BJ (cell line): ENCODE measurements at regions of chr3 and their contacts with region 1.

Region 1: GRCh38 chr3:148932972-148933371 is 58.4 kb upstream of the GYG1 start:
- DNase-seq: no peak
- H3K4me3 ChIP-seq: no peak overlapping the region
- H3K27me3 ChIP-seq: no peaks in the 10 kb centered on the region
- CTCF ChIP-seq: no peak

Region 2: DNA sequence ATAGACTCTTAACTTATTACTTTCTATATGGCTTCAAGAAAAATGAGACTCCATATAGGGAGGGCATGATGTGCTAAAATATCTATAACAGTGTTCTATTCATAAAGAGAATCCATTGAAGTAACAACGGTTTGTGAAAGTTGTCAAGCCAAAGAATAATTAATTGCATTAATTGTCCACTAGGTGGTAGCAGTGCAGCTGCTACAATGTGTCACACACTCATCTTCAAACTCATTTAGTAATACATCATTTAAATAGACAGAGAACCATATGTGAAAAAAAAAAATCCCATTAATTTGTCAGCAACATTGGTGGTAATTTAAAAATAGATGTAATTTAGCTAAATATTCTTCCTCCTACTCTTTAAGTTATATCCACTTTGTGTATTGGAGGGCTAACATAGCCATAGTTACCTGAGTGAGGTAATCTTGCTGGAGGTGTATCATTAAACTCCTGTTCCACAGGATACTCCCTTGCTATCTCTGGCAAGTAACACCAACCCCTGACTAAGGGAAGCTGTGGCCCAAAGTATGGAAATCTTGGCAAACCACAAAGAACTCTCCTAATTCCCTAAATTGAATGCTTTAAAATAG is 71.6 kb before region 1 on chr3:
- CTCF ChIA-PET with region 1: interaction called, 13 read pairs
- POLR2A ChIA-PET with region 1: no interaction called
- DNase-seq: no peak
- H3K4me3 ChIP-seq: no peak overlapping the region
- H3K27me3 ChIP-seq: no peaks in the 10 kb centered on the region; the same call in 1 of the 2 replicates
- CTCF ChIP-seq: peak; percentile 53

Region 3: DNA sequence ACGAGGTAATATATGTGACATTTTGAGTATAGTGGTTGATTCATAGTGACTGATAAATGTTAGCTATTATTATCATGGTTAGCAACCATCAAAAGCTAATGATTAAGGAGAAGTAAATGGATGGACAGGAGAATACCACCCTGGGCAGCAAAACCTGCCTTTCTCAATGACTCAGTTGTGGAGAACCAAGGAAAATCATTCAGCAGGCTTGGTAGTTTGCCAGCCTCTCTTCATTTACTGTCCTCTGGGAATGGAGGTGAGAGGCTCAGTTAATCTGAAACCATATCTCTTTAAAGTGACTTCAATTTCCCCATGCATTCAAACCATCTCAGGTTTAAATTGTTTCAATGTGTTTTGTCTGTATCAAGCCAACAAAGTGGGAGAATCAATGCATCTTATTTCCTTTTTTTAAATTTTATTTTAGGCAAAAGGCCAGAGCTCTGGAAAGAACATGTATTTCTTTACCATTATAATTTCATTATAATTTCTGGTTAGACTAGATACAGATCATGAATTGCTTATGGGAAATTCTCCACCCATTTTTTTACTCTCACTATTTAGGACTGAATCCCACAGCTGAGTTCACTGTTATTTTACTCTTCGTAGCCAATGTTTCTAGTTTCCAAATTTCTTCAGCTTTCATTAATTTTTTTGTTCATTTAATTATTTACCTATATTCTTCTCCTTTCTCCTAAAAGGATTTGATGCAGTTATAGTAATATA is 397.8 kb after region 1 on chr3:
- CTCF ChIA-PET with region 1: no interaction called
- POLR2A ChIA-PET with region 1: no interaction called
- DNase-seq: no peak
- H3K4me3 ChIP-seq: no peak overlapping the region
- H3K27me3 ChIP-seq: no peaks in the 10 kb centered on the region
- CTCF ChIP-seq: no peak